B cell (primary cell): ENCODE measurements at regions of chr16 and their contacts with region 1.

Region 1: GRCh38 chr16:31284926-31285325 is 25.2 kb downstream of the ITGAM start:
- DNase-seq: no peak
- ATAC-seq: no peak
- H3K4me3 ChIP-seq: no peak overlapping the region
- H3K4me3 Mint-ChIP-seq: no peak overlapping the region
- H3K27ac ChIP-seq: no peak overlapping the region
- H3K27ac Mint-ChIP-seq: no peak overlapping the region
- H3K4me1 ChIP-seq: no peaks in the 10 kb centered on the region
- H3K4me1 Mint-ChIP-seq: peaks cover 16% of the 10 kb centered on the region
- H3K27me3 ChIP-seq: no peaks in the 10 kb centered on the region
- H3K27me3 Mint-ChIP-seq: no peaks in the 10 kb centered on the region
- CTCF ChIP-seq: no peak

Region 2: DNA sequence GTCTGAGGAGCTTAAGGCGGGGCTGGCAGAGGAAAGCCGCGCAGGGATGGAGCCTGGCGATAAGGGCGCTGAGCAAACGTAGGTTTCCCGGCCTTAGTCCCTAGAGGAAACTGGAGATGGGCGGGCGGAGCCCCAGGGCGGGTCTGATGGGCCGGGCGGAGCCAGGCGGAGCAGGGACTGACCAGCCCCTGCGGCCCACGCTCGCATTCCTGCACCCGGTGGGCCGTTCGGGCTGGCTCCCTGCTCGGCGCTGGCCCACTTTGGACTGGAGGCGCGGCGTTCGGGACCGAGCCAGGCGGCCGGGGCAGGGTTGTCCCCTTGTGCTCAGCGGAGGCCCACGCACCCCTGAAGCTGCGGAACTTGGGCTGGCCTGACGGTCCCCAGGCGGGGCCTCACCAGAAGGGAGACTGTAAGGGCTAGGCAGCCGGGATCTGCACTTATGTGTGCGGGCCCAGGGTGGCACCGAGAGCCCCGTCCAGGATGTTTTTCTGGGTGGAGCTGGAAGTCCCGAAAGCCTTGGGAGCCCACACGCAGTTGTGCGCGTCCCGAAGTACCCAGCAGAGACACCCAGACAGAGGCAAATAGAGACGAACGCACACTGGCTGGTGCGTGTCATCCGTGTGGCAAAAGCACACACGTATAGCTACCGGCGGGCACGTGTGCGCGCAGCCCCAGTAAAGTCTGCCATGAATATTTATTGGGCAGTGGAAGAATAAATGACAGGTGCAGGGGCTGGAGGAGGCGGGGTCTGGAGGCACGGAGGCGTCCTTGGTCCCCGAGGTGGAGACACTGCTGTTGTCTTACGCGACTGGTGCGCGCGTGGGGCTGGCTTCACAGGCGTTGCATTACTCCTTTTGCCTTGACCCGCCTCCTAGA is 69.4 kb before region 1 on chr16:
- CTCF ChIA-PET with region 1: no interaction called
- POLR2A ChIA-PET with region 1: interaction called, 11 read pairs
- intact Hi-C with region 1: no loop called
- DNase-seq: peak; percentile 62
- ATAC-seq: peak; percentile 45
- H3K4me3 ChIP-seq: peak overlapping the region; percentile 21 to 56 (median 46)
- H3K4me3 Mint-ChIP-seq: peak overlapping the region; percentile 84
- H3K27ac ChIP-seq: no peak overlapping the region
- H3K27ac Mint-ChIP-seq: no peak overlapping the region
- H3K4me1 ChIP-seq: peaks cover 41 to 42% of the 10 kb centered on the region in 2 donors
- H3K4me1 Mint-ChIP-seq: peaks cover 42% of the 10 kb centered on the region
- H3K27me3 ChIP-seq: peaks cover 0 to 58% (median 28%) of the 10 kb centered on the region in 4 experiments
- H3K27me3 Mint-ChIP-seq: peaks cover 37% of the 10 kb centered on the region
- CTCF ChIP-seq: no peak

Region 3: DNA sequence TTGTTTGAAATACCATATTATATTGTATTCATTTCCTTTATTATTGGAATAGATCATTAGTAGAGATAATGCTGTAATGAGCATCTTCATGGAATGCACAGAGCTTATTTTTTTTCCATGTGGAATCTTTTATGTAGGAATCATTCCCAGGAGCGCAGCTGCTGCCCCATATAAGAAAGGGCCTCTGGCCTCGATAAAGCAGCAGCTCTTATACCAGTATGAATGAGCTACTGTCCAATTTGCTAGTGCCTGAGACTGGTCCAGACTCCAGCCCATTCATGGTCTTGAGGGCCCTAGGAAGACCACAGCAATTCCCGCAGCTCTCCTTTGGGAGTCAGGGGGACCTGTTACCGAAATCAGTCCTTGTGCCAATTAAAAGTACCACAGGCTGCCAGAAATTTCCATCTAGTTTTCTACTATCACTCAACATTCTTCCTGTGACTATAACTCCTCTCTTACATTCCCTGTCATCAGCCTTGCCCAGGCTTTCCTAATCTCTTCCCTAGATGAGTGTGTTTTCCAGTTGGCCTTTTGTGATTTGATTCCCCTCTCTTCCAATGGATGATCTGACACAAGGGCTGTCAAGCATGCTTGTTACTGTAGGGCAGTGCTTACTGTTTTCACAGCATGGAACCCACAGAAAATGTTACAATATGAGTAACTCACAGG is 155.7 kb after region 1 on chr16:
- CTCF ChIA-PET with region 1: no interaction called
- POLR2A ChIA-PET with region 1: interaction called, 10 read pairs
- intact Hi-C with region 1: no loop called
- DNase-seq: no peak
- ATAC-seq: no peak
- H3K4me3 ChIP-seq: no peak overlapping the region
- H3K4me3 Mint-ChIP-seq: no peak overlapping the region
- H3K27ac ChIP-seq: no peak overlapping the region
- H3K27ac Mint-ChIP-seq: no peak overlapping the region
- H3K4me1 ChIP-seq: peaks cover 11 to 12% of the 10 kb centered on the region in 2 donors
- H3K4me1 Mint-ChIP-seq: peaks cover 19% of the 10 kb centered on the region
- H3K27me3 ChIP-seq: peaks cover 0 to 6% (median 2%) of the 10 kb centered on the region in 4 experiments
- H3K27me3 Mint-ChIP-seq: peaks cover 3% of the 10 kb centered on the region
- CTCF ChIP-seq: no peak